ENCODE measurements at regions of chr12 and their contacts with region 1.

Region 1: GRCh38 chr12:53701518-53702260 is 25.6 kb downstream of the CALCOCO1 start:
- DNase-seq: peak; percentile 78 to 97
- H3K4me3 ChIP-seq: no peak overlapping the region
- CTCF ChIP-seq: peak in 1 of 3 donors; percentile 87
- POLR2A ChIP-seq: no peak

Region 2: GRCh38 chr12:53414756-53415417 is 286.8 kb before region 1 on chr12:
- intact Hi-C with region 1: no loop called
- DNase-seq: no peak
- H3K4me3 ChIP-seq: no peak overlapping the region
- CTCF ChIP-seq: no peak
- POLR2A ChIP-seq: no peak

Region 3: GRCh38 chr12:53561590-53561953 is 140.1 kb before region 1 on chr12:
- intact Hi-C with region 1: no loop called
- DNase-seq: no peak
- H3K4me3 ChIP-seq: no peak overlapping the region
- CTCF ChIP-seq: no peak
- POLR2A ChIP-seq: no peak

Region 4: GRCh38 chr12:53743266-53744129 is 41.8 kb after region 1 on chr12:
- intact Hi-C with region 1: loop called (anchors 5 kb)
- DNase-seq: peak in 1 of 2 donors; percentile 91
- H3K4me3 ChIP-seq: no peak overlapping the region
- CTCF ChIP-seq: peak in 1 of 3 donors; percentile 38
- POLR2A ChIP-seq: no peak

Region 5: GRCh38 chr12:54126029-54126695 is 424.5 kb after region 1 on chr12:
- intact Hi-C with region 1: no loop called
- DNase-seq: peak; percentile 59 to 95
- H3K4me3 ChIP-seq: peak overlapping the region; percentile 68
- CTCF ChIP-seq: no peak
- POLR2A ChIP-seq: no peak